WTC11 (cell line): ENCODE measurements at regions of chr2 and their contacts with region 1.

Region 1: DNA sequence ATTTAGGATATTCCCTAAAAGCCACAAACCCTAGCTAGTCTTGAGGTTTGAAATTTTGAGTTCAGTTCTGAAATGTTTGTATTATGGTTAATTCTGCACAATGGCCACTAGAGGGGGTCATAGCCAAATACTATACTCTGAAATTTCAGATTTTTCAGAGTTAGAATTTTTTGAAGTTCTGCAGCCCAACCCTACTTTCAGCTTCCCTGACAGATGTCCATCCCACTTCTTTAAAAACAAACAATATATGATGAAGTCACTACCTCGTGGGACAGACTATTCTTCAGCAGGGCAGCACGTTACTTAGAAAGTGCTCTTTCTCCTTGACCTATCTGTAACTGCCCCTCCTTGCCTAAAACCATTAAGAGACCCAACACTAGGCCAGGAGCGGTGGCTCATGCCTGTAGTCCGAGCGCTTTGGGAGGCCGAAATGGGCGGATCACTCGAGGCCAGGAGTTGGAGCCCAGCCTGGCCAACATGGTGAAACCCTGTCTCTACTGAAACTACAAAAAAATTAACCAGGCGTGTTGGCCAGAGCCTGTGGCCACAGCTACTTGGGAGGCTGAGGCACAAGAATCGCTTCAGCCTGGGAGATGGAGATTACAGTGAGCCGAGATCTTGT is 48.2 kb upstream of the PAPOLG start:
- DNase-seq: peak; percentile 30
- ATAC-seq: peak; percentile 74
- H3K4me3 Mint-ChIP-seq: no peak overlapping the region
- H3K27ac Mint-ChIP-seq: no peak overlapping the region
- H3K4me1 Mint-ChIP-seq: peaks cover 8% of the 10 kb centered on the region
- H3K27me3 Mint-ChIP-seq: no peaks in the 10 kb centered on the region
- CTCF ChIP-seq: peak; percentile 63; the same call in 1 of the 2 replicates

Region 2: DNA sequence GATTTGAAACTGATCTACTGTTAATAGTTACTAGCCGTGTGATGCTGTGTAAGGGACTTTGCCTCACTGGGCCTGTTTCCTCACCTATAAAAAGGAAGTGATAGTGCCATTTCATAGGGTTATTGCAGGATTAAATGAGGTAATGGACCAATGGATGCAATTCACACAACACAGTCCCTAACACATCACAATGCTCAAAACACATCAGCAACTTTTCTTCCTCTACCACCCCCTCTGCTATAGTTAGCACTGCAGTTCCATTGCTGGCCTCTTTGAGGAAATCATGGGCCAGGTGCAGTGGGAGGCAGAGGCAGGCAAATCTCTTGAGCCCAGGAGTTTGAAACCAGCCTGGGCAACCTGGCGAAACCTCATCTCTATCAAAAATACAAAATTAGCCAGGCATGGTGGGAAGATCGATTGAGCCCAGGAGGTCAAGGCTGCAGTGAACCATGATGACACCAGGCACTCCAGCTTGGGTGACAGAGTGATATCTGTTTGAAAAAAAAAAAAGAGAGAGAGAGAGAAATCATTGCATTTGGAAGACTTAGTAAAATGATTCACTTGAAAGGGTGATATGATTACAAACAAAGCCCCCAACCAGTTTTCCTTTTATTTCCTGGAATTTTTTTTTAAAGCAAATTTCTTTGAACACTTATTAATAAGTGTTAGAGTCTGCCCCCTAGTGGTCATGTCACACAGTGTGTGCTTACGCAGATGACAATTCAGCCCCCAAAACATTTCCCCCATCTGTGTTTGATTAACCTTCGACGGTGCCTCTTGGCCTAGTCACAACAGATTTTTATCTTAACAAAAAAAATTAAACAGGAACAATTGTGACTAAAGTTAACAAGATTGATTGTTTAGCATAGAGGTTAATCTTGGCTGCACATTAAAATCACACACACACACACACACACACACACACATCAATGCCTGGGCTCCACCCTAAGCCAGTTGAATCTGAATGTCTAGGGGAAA is 65.8 kb before region 1 on chr2:
- CTCF ChIA-PET with region 1: no interaction called
- POLR2A ChIA-PET with region 1: no interaction called
- DNase-seq: peak; percentile 39
- ATAC-seq: peak; percentile 86
- H3K4me3 Mint-ChIP-seq: no peak overlapping the region
- H3K27ac Mint-ChIP-seq: no peak overlapping the region
- H3K4me1 Mint-ChIP-seq: peaks cover 12% of the 10 kb centered on the region; the same call in 1 of the 2 replicates
- H3K27me3 Mint-ChIP-seq: no peaks in the 10 kb centered on the region; the same call in 1 of the 2 replicates
- CTCF ChIP-seq: peak; percentile 69

Region 3: GRCh38 chr2:60735496-60736250 is 27.8 kb after region 1 on chr2:
- CTCF ChIA-PET with region 1: interaction called, 11 read pairs
- POLR2A ChIA-PET with region 1: no interaction called
- DNase-seq: peak; percentile 64
- ATAC-seq: peak; percentile 89
- H3K4me3 Mint-ChIP-seq: peak overlapping the region; percentile 92
- H3K27ac Mint-ChIP-seq: no peak overlapping the region
- H3K4me1 Mint-ChIP-seq: peaks cover 10% of the 10 kb centered on the region
- H3K27me3 Mint-ChIP-seq: peaks cover 70% of the 10 kb centered on the region
- CTCF ChIP-seq: no peak

Region 4: GRCh38 chr2:60756191-60757041 is 48.6 kb after region 1 on chr2 and contains the start of gene PAPOLG:
- CTCF ChIA-PET with region 1: interaction called, 17 read pairs
- POLR2A ChIA-PET with region 1: no interaction called
- DNase-seq: peak; percentile 99
- ATAC-seq: peak; percentile 97
- H3K4me3 Mint-ChIP-seq: peak within 1 kb of the TSS; percentile 100
- H3K27ac Mint-ChIP-seq: peak within 1 kb of the TSS; percentile 100
- H3K4me1 Mint-ChIP-seq: peaks cover 20% of the 10 kb centered on the region
- H3K27me3 Mint-ChIP-seq: no peaks in the 10 kb centered on the region
- CTCF ChIP-seq: no peak
- total RNA-seq, gene PAPOLG: 19.8 to 22.5 TPM (median 21.5 TPM) in 3 replicates

Region 5: DNA sequence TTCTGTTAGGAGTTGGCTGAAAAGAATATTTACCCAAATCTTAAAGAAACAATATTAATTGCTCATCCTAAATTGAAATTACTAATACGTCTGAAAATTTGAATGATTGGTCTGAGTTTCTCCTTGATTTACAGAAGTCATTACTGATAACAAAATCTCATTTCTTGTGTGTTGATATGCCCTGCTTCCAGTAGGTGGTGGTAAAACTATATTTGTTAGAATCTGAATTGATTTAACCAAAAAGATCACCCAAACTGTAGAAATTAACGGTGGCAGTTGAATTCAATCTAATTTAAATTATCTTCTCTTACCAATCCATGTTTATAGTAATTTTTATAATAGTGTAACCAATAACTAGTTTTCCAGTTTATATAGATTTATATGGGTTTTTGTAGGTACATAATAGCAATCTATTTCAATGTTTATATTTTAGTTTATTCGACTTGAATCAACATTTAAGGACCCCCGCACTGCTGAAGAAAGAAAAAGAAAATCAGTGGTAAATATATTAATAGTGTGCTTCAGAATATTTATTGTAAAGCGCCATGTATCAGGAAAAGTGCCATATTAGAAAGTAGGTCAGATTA is 86.5 kb after region 1 on chr2:
- CTCF ChIA-PET with region 1: interaction called, 11 read pairs
- POLR2A ChIA-PET with region 1: no interaction called
- DNase-seq: no peak
- ATAC-seq: no peak
- H3K4me3 Mint-ChIP-seq: no peak overlapping the region
- H3K27ac Mint-ChIP-seq: no peak overlapping the region
- H3K4me1 Mint-ChIP-seq: no peaks in the 10 kb centered on the region
- H3K27me3 Mint-ChIP-seq: no peaks in the 10 kb centered on the region
- CTCF ChIP-seq: no peak